ENCODE measurements at regions of chr7 and their contacts with region 1.

Region 1: DNA sequence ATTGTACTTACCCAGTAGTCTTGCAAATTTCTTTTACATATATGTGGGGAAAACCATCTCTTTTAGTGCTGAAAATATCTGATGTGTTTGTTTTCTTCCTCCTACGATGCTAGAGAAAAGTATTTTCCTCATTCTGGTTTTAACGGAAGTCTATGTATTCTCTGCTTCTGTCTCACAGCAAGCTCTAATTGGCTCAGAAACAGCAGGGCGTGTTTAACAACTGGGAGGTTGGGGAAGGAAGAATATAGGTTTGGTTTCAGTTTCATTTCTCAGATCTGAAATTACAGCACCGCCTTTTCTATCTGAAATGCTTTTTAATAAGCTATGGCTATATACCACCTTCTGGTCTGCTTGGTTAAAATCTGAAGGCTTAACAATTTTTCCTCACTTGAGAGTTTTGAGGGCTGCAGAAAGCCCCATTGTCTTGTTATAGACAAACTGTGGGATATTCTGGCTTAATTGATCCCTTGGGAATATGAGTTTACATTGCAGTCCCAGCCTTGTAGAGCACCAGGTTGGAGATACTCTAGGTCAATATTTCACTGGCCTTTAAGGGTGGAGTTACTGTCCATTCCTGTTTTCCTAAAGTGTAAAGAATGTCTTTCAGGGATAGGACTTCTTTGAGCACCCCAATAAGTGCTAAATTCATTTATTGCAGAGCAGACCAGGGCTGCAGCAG is at the start of gene SAMD9:
- DNase-seq: peak; percentile 63
- H3K4me3 Mint-ChIP-seq: peak within 1 kb of the TSS; percentile 91
- H3K27ac Mint-ChIP-seq: peak within 1 kb of the TSS; percentile 82
- H3K4me1 Mint-ChIP-seq: peaks cover 60% of the 10 kb centered on the region
- H3K27me3 Mint-ChIP-seq: no peaks in the 10 kb centered on the region
- total RNA-seq, gene SAMD9: 11.5 and 11.8 TPM in 2 replicates

Region 2: DNA sequence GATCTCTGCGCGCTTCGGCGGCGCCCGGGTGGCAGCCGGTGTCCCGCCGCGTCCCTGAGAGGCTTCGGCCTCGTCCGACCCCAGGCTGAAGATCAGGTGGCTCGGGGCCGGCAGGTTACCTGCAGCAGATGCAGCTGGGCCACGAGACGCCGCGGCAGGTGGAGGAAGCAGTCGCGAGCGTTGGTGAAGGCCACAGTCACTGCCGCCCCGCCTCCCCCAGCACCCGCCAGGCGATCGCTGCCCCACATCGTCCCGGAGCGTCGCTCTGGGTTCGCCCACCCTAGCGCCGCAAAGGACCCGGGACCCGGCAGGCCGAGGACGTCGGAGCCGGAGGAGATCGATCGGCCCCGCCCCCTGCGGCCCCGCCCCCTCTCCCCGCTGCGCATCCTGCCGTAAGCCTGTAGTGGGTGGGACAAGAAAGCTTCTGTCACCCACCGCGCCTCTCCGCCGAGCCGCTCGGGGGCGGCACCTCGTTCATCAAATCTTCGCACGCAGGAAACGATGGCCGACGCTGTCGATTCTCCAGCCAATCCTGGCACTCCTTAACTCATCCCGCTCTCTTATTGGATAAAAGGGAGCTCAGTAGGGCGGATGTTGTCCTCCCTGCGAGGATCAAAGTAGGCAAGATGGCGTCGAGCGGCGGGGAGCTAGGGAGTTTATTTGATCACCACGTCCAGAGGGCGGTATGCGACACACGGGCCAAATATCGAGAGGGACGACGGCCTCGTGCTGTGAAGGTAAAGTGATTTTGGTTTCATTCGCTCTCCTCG is 589.6 kb before region 1 on chr7 and contains the starts of genes PEX1 and RBM48:
- intact Hi-C with region 1: loop called (anchors 1 kb)
- DNase-seq: peak; percentile 94
- H3K4me3 Mint-ChIP-seq: peak within 1 kb of the TSS; percentile 91
- H3K27ac Mint-ChIP-seq: peak within 1 kb of the TSS; percentile 94
- H3K4me1 Mint-ChIP-seq: peaks cover 24% of the 10 kb centered on the region
- H3K27me3 Mint-ChIP-seq: no peaks in the 10 kb centered on the region
- total RNA-seq, gene PEX1: 14.7 and 17.0 TPM in 2 replicates
- total RNA-seq, gene RBM48: 17.2 and 17.6 TPM in 2 replicates

Region 3: DNA sequence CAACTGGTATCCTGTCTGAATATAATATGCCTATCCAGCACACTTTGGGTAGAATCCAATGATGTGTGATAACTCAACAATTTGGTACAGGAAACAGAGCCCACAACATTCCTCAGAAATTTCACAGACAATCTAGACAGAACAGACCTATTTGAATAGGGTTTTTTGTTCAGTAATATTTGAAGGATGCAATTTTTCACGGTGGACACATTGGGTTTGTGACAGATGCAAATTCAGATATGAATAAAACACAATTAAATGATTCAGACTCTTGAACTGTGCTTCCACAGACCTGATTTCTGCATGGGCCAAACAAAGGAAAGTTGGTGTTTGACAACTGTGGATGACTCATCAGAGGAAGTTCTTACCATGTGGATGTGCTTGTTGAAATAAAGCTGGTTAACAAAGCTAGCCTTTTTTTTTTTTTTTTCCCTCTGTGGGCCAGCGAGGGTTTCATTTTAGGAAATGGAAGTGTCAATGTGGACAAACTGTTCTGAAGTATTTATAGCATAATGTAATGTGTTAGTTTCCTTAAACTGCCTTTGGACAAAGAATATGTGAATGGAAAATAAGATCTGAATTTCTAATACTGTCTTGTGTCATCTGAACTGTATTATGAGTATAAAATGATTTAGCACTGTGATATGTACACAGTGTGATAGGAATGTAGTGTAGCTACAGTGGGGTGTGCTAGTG is 484.6 kb before region 1 on chr7:
- intact Hi-C with region 1: loop called (anchors 5 kb)
- DNase-seq: peak; percentile 48
- H3K4me3 Mint-ChIP-seq: peak overlapping the region; percentile 64
- H3K27ac Mint-ChIP-seq: peak overlapping the region; percentile 94
- H3K4me1 Mint-ChIP-seq: peaks cover 80% of the 10 kb centered on the region
- H3K27me3 Mint-ChIP-seq: no peaks in the 10 kb centered on the region

Region 4: GRCh38 chr7:93036807-93037206 is 81.2 kb before region 1 on chr7:
- intact Hi-C with region 1: loop called (anchors 1 kb)
- DNase-seq: peak; percentile 53
- H3K4me3 Mint-ChIP-seq: no peak overlapping the region
- H3K27ac Mint-ChIP-seq: peak overlapping the region; percentile 85
- H3K4me1 Mint-ChIP-seq: peaks cover 50% of the 10 kb centered on the region
- H3K27me3 Mint-ChIP-seq: no peaks in the 10 kb centered on the region

Region 5: GRCh38 chr7:93086748-93087147 is 31.2 kb before region 1 on chr7:
- intact Hi-C with region 1: no loop called
- DNase-seq: no peak
- H3K4me3 Mint-ChIP-seq: no peak overlapping the region
- H3K27ac Mint-ChIP-seq: no peak overlapping the region
- H3K4me1 Mint-ChIP-seq: no peaks in the 10 kb centered on the region
- H3K27me3 Mint-ChIP-seq: peaks cover 41% of the 10 kb centered on the region

Region 6: GRCh38 chr7:93147363-93147762 is 29.4 kb after region 1 on chr7:
- intact Hi-C with region 1: loop called (anchors 1 kb)
- DNase-seq: peak; percentile 22
- H3K4me3 Mint-ChIP-seq: peak overlapping the region; percentile 93
- H3K27ac Mint-ChIP-seq: peak overlapping the region; percentile 87
- H3K4me1 Mint-ChIP-seq: peaks cover 68% of the 10 kb centered on the region
- H3K27me3 Mint-ChIP-seq: no peaks in the 10 kb centered on the region

Measured in activated T-helper 1 cell treated with anti-CD3 and anti-CD28 coated beads, Interleukin-12 subunit alpha, Interleukin-12 subunit beta, Interleukin-2, Interleukin-4 antibody, amounts not matched to agents 30 ng/mL and 10 ng/mL and 1 ng/mL, durations not matched to agents 14 hours and 24 hours and 36 hours (primary cell).